ENCODE measurements at regions of chr3 and their contacts with region 1.

Region 1: GRCh38 chr3:194837457-194838127 is 151.9 kb downstream of the FAM43A start:
- DNase-seq: no peak
- H3K4me3 ChIP-seq: no peak overlapping the region
- H3K27ac ChIP-seq: no peak overlapping the region
- H3K4me1 ChIP-seq: peaks cover 5% of the 10 kb centered on the region
- H3K27me3 ChIP-seq: no peaks in the 10 kb centered on the region
- CTCF ChIP-seq: no peak
- POLR2A ChIP-seq: no peak

Region 2: DNA sequence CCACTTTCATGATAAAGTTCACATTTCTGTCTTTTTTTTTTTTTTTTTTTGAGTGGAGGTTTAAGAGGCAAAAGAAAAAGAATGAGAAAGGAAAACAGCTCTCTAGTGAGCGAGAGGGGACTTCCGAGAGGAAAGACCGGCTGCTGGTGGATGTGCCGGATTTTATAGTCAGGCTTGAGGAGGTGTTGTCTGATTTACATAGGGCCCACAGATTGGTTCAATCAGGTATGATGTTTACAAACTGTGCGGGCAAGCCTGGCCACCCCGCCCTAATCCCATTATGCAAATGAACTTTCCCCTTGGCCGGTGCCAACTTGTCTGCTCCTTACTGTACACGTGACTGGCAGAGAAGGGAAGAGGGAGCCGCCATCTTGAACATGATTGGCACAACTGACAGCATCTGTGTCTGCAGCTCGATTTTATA is 107.3 kb before region 1 on chr3:
- intact Hi-C with region 1: no loop called
- DNase-seq: no peak
- H3K4me3 ChIP-seq: no peak overlapping the region
- H3K27ac ChIP-seq: no peak overlapping the region
- H3K4me1 ChIP-seq: no peaks in the 10 kb centered on the region
- H3K27me3 ChIP-seq: no peaks in the 10 kb centered on the region
- CTCF ChIP-seq: no peak
- POLR2A ChIP-seq: no peak

Region 3: GRCh38 chr3:194879991-194880939 is 42.7 kb after region 1 on chr3:
- intact Hi-C with region 1: loop called (anchors 2 kb)
- DNase-seq: peak; percentile 85 to 89
- H3K4me3 ChIP-seq: no peak overlapping the region
- H3K27ac ChIP-seq: peak overlapping the region; percentile 59
- H3K4me1 ChIP-seq: peaks cover 48% of the 10 kb centered on the region
- H3K27me3 ChIP-seq: no peaks in the 10 kb centered on the region
- CTCF ChIP-seq: no peak
- POLR2A ChIP-seq: no peak